Common myeloid progenitor, CD34-positive (primary cell): ENCODE measurements at regions of chr15 and their contacts with region 1.

Region 1: GRCh38 chr15:31448635-31448979 is 122.0 kb downstream of the KLF13 start:
- DNase-seq: peak; percentile 81 to 96 (median 92)
- H3K4me3 ChIP-seq: peak overlapping the region in 3 of 7 experiments; percentile 29 to 47 (median 40)
- H3K27ac ChIP-seq: peak overlapping the region in 1 of 2 experiments; percentile 10
- H3K4me1 ChIP-seq: peaks cover 12 to 23% (median 14%) of the 10 kb centered on the region in 4 experiments
- H3K27me3 ChIP-seq: no peaks in the 10 kb centered on the region

Region 2: DNA sequence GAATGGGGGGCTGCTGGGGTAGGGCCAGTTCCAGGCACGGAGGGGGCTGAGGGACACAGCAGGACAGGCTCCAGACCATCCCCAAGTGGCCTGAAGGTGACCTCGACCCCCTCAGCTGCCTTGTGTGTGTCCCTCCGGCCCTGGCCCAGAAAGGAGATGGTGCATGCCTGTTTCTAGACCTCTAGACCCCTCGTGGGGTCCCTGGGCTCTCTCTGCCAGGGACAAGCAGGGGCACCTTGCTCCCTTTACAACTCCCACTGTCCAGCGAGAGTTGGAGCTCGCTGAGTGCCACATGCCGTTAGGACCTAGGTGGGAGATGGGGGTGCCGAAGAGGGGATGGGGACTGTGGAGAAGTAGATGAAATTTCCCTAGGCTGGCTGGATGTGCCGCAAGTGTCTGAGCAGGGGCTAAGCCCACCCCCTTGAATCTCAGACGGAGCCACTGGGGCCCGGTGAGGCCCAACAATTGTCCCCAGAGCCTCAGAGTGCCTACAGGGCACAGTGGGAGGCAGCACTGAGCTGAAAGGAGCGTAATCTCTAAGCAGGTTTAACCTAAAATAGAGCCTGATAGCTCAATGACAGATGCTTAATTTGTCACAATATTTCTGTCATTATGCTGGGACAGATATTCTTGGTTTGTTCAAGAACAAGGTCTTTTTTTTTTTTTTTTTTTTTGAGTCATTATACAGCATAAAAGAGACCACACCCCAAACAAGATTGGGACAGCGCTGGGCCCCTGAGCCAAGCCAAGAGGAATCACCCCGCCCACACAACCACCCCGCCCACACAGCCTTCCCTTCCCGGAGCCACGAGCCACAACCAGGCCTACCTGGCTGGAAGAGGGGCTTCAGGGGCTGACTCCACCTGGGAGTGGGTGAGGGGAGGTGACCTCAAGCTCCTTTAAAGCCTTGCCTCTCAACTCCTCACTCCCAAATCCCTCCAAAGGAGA is 145.6 kb before region 1 on chr15:
- CTCF ChIA-PET with region 1: no interaction called
- POLR2A ChIA-PET with region 1: interaction called, 10 read pairs
- DNase-seq: peak in 2 of 3 donors; percentile 31 to 47
- H3K4me3 ChIP-seq: no peak overlapping the region
- H3K27ac ChIP-seq: no peak overlapping the region
- H3K4me1 ChIP-seq: peaks cover 4 to 40% (median 26%) of the 10 kb centered on the region in 4 experiments
- H3K27me3 ChIP-seq: no peaks in the 10 kb centered on the region